Stomach (tissue), 19 donors: ENCODE measurements at regions of chr7 and their contacts with region 1.

Region 1: DNA sequence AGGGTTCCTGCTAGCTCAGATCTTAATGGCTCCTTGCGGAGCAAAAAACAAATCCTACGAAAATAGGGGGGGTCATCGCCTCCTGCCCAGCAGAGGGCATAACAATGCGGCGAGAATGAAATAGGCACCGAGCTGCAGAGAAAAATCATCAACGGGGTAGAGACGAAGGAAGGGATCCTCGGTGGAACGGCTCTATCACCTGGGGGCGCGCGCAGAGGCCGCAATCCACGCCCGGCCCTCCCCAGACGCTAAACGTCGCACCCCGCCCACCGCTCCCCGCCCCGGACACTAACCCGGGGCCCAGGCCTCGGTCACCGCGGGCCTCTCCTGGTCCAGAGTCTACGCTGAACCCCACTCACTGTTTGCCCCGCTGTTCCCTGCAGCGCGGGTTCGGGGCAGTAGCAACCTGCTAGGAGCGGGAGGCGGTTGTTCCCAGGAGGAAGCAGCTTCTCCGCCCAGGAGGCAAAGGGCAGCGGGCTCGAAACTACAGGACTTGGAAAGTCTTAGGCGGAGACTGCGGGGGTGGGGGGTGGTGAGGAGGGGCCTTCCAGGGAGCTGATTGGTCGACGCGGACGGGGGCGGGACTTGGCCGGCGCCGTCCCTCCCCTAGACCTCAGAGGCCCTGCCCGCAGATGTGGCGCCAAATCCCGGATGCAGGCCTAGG is at the start of gene TCAF1:
- DNase-seq: peak; percentile 96 to 98
- H3K4me3 ChIP-seq: peak within 1 kb of the TSS; percentile 60 to 75 (median 64)
- H3K27ac ChIP-seq: peak within 1 kb of the TSS; percentile 85 to 97 (median 96)
- H3K4me1 ChIP-seq: peaks cover 9 to 35% (median 20%) of the 10 kb centered on the region in 4 donors
- H3K27me3 ChIP-seq: no peaks in the 10 kb centered on the region
- CTCF ChIP-seq: peak in 1 of 7 experiments; percentile 6
- EP300 ChIP-seq: no peak
- POLR2A ChIP-seq: peak in 2 of 4 donors; percentile 17 to 44
- total RNA-seq, gene TCAF1: 13.4 to 94.6 (median 30.3) TPM

Region 2: GRCh38 chr7:143846692-143847091 is 55.1 kb before region 1 on chr7:
- intact Hi-C with region 1: loop called (anchors 10 kb)
- DNase-seq: no peak
- H3K4me3 ChIP-seq: no peak overlapping the region
- H3K27ac ChIP-seq: no peak overlapping the region
- H3K4me1 ChIP-seq: no peaks in the 10 kb centered on the region
- H3K27me3 ChIP-seq: no peaks in the 10 kb centered on the region
- CTCF ChIP-seq: no peak
- EP300 ChIP-seq: no peak
- POLR2A ChIP-seq: no peak

Region 3: GRCh38 chr7:144074373-144074772 is 172.6 kb after region 1 on chr7:
- intact Hi-C with region 1: no loop called
- DNase-seq: no peak
- H3K4me3 ChIP-seq: no peak overlapping the region
- H3K27ac ChIP-seq: no peak overlapping the region
- H3K4me1 ChIP-seq: no peaks in the 10 kb centered on the region
- H3K27me3 ChIP-seq: no peaks in the 10 kb centered on the region
- CTCF ChIP-seq: no peak
- EP300 ChIP-seq: no peak
- POLR2A ChIP-seq: no peak